Right cardiac atrium (tissue), 5 donors: ENCODE measurements at regions of chr12 and their contacts with region 1.

Region 1: GRCh38 chr12:106247674-106248311 is at the start of gene CKAP4:
- DNase-seq: peak; percentile 86 to 95 (median 94)
- ATAC-seq: peak; percentile 82 to 88
- H3K4me3 ChIP-seq: peak within 1 kb of the TSS; percentile 90
- H3K27ac ChIP-seq: peak within 1 kb of the TSS; percentile 86
- H3K4me1 ChIP-seq: peaks cover 11% of the 10 kb centered on the region
- H3K27me3 ChIP-seq: no peaks in the 10 kb centered on the region
- total RNA-seq, gene CKAP4: 35.6 to 53.7 (median 41.3) TPM

Region 2: DNA sequence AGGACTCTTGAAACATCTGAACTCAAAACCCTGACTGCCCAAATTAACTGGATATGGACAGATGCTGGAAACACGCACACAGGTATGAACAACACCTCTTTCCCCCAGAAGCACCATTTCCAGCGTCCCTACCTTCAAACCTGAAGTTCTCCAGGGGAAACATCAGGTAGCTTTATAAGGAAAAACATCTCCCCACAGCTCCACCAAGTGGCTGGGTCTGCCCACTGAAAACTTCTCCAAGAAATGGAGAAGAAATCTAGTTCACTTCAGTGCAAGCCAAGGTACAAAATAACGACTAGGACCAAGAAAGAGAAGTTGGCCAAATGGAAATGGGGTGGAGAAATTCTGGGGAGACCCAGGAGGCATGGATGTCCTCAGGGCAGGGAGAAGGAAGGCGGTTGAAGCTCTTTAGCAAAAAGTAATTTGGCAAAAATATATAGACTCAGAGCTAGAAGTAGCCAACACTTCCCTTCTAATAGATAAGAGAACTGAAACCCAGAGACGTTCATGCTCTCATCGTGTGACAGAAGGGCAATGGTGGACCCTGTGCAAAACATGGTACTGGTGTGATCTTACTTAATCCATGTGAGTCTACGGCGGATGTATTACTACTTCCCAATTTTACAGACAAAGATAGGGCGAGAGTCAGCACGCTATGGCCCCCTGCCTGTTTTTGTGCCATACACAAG is 98.6 kb before region 1 on chr12:
- intact Hi-C with region 1: no loop called
- DNase-seq: peak in 1 of 3 donors; percentile 71
- ATAC-seq: no peak
- H3K4me3 ChIP-seq: no peak overlapping the region
- H3K27ac ChIP-seq: no peak overlapping the region
- H3K4me1 ChIP-seq: peaks cover 8% of the 10 kb centered on the region
- H3K27me3 ChIP-seq: no peaks in the 10 kb centered on the region

Region 3: GRCh38 chr12:106302401-106303201 is 54.8 kb after region 1 on chr12 and contains the start of gene TCP11L2:
- intact Hi-C with region 1: loop called in 2 of 4 experiments (anchors 2 to 5 kb)
- DNase-seq: peak; percentile 89 to 97 (median 96)
- ATAC-seq: peak; percentile 90 to 92
- H3K4me3 ChIP-seq: peak within 1 kb of the TSS; percentile 71
- H3K27ac ChIP-seq: peak within 1 kb of the TSS; percentile 96
- H3K4me1 ChIP-seq: peaks cover 6% of the 10 kb centered on the region
- H3K27me3 ChIP-seq: no peaks in the 10 kb centered on the region
- total RNA-seq, gene TCP11L2: 54.0 to 64.5 (median 61.9) TPM

Region 4: GRCh38 chr12:106345739-106346138 is 97.9 kb after region 1 on chr12:
- intact Hi-C with region 1: loop called in 1 of 4 experiments (anchors 10 kb)
- DNase-seq: peak in 1 of 3 donors; percentile 28
- ATAC-seq: peak; percentile 54 to 56
- H3K4me3 ChIP-seq: no peak overlapping the region
- H3K27ac ChIP-seq: no peak overlapping the region
- H3K4me1 ChIP-seq: peaks cover 8% of the 10 kb centered on the region
- H3K27me3 ChIP-seq: no peaks in the 10 kb centered on the region